WTC11 (cell line): ENCODE measurements at regions of chr1 and their contacts with region 1.

Region 1: GRCh38 chr1:33633019-33633801 is 160.8 kb downstream of the ZSCAN20 start:
- DNase-seq: peak; percentile 96
- ATAC-seq: peak; percentile 76
- H3K4me3 Mint-ChIP-seq: no peak overlapping the region
- H3K27ac Mint-ChIP-seq: no peak overlapping the region
- H3K4me1 Mint-ChIP-seq: peaks cover 31% of the 10 kb centered on the region
- H3K27me3 Mint-ChIP-seq: peaks cover 20% of the 10 kb centered on the region
- CTCF ChIP-seq: peak; percentile 85

Region 2: DNA sequence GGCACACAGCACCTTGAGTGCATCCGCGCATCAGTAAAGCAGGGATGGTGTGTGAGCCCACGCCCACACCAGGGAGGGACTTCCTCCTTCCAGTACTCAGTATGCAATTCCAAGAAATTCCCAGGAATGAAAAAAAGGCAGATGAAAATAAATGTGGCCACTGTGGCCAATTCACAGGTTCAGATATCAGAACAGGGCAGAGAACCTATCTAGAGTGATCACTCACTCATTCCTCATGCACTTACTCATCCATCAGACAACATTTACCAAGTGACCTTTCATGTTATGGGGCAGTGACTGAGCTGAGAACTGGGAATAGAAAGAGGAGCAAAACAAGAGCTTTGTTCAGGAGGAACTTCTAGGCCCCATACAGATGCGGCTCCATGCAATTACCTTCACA is 47.1 kb before region 1 on chr1:
- CTCF ChIA-PET with region 1: interaction called, 12 read pairs
- POLR2A ChIA-PET with region 1: no interaction called
- DNase-seq: no peak
- ATAC-seq: no peak
- H3K4me3 Mint-ChIP-seq: no peak overlapping the region
- H3K27ac Mint-ChIP-seq: no peak overlapping the region
- H3K4me1 Mint-ChIP-seq: no peaks in the 10 kb centered on the region
- H3K27me3 Mint-ChIP-seq: no peaks in the 10 kb centered on the region; the same call in 1 of the 2 replicates
- CTCF ChIP-seq: no peak

Region 3: DNA sequence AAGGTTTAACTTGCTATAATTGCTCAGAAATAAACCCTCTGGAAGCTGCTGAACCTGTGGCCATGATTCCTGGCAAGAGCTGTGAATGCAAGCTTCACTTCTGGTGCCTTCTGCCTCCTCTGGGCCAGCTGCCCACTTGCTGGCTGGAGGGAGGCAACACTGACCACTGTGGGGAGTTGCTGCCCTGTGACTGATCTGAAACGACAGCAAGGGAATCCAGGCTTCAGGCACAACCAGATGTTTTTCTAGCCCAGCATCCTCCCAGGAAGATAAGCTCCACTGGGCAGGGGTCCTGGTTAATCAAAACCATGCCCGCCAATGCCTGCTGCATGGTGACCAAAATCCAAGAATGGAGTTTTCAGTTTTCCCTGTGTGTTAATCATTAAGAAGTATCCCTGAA is 50.7 kb after region 1 on chr1:
- CTCF ChIA-PET with region 1: interaction called, 13 read pairs
- POLR2A ChIA-PET with region 1: no interaction called
- DNase-seq: no peak
- ATAC-seq: no peak
- H3K4me3 Mint-ChIP-seq: no peak overlapping the region
- H3K27ac Mint-ChIP-seq: no peak overlapping the region
- H3K4me1 Mint-ChIP-seq: peaks cover 9% of the 10 kb centered on the region
- H3K27me3 Mint-ChIP-seq: no peaks in the 10 kb centered on the region
- CTCF ChIP-seq: no peak

Region 4: GRCh38 chr1:34113887-34114286 is 480.7 kb after region 1 on chr1:
- CTCF ChIA-PET with region 1: interaction called, 16 read pairs
- POLR2A ChIA-PET with region 1: no interaction called
- DNase-seq: peak; percentile 35
- ATAC-seq: peak; percentile 86
- H3K4me3 Mint-ChIP-seq: no peak overlapping the region
- H3K27ac Mint-ChIP-seq: peak overlapping the region; percentile 89
- H3K4me1 Mint-ChIP-seq: peaks cover 23% of the 10 kb centered on the region
- H3K27me3 Mint-ChIP-seq: no peaks in the 10 kb centered on the region
- CTCF ChIP-seq: peak; percentile 52; the same call in 1 of the 2 replicates